K562 (cell line): ENCODE measurements at regions of chr9 and their contacts with region 1.

Region 1: GRCh38 chr9:114505187-114506081 is at the start of gene WHRN:
- DNase-seq: peak; percentile 95 to 96 (median 96)
- ATAC-seq: peak; percentile 80
- H3K4me3 ChIP-seq: peak within 1 kb of the TSS; percentile 60
- H3K27ac ChIP-seq: peak within 1 kb of the TSS; percentile 91
- H3K4me1 ChIP-seq: peaks cover 21 to 24% of the 10 kb centered on the region in 2 experiments; a peak in 3 of 5 replicates
- H3K27me3 ChIP-seq: peaks cover 15 to 18% of the 10 kb centered on the region in 2 experiments
- CTCF ChIP-seq: no peak
- EP300 ChIP-seq: no peak
- POLR2A ChIP-seq: peak; percentile 56
- RAD21 ChIP-seq: no peak
- polyA plus RNA-seq, gene WHRN: 0.31 TPM

Region 2: GRCh38 chr9:114131808-114132549 is 373.5 kb before region 1 on chr9:
- CTCF ChIA-PET with region 1: no interaction called
- POLR2A ChIA-PET with region 1: no interaction called
- in situ Hi-C with region 1: no loop called
- intact Hi-C with region 1: no loop called
- DNase-seq: no peak
- ATAC-seq: no peak
- H3K4me3 ChIP-seq: no peak overlapping the region
- H3K27ac ChIP-seq: no peak overlapping the region
- H3K4me1 ChIP-seq: no peaks in the 10 kb centered on the region
- H3K27me3 ChIP-seq: peaks cover 3 to 22% of the 10 kb centered on the region in 2 experiments; a peak in 2 of 5 replicates
- CTCF ChIP-seq: no peak
- EP300 ChIP-seq: no peak
- POLR2A ChIP-seq: no peak
- RAD21 ChIP-seq: no peak

Region 3: DNA sequence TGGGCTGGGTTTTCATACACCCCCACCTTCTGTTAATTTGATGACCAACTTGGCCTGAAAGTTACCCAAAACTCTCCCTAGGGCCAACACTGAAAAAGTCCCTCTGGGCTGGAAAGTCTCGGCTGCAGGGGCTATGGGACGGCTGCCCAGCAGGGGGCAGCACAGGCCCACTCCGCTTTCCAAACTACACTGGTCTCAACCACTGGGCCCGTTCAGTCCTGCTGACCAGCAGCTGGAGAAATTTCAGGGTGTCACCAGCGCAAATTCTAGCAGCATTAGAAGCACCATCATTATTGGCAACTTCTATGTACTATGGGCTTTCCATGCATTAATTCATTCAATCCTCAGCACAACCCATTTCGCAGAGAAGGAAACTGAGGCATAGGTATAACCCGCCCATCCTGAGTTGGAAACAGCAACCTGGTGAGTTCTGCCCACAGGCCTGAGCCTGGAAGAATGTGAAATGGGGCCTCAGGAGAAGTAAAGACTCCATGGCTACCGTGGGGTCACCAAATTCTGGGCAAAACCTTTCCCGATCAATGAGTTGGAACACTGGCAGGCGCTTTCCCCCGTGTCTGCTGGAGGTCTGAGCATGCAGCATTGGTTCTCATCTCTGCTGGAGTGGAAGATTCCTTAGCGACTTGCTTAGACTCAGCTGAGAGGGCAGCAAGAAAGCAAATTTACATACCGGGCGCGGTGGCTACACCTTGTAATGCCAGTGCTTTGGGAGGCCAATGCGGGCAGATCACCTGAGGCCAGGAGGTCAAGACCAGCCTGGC is 166.1 kb before region 1 on chr9:
- CTCF ChIA-PET with region 1: no interaction called
- POLR2A ChIA-PET with region 1: interaction called, 3 read pairs
- in situ Hi-C with region 1: no loop called
- intact Hi-C with region 1: loop called (anchors 5 kb)
- DNase-seq: peak; percentile 72 to 88 (median 86)
- ATAC-seq: peak; percentile 84
- H3K4me3 ChIP-seq: no peak overlapping the region
- H3K27ac ChIP-seq: no peak overlapping the region
- H3K4me1 ChIP-seq: peaks cover 0 to 3% of the 10 kb centered on the region in 2 experiments; a peak in 1 of 5 replicates
- H3K27me3 ChIP-seq: no peaks in the 10 kb centered on the region
- CTCF ChIP-seq: peak; percentile 83 to 95 (median 86)
- EP300 ChIP-seq: no peak
- POLR2A ChIP-seq: no peak
- RAD21 ChIP-seq: peak; percentile 14 to 56; a peak in 2 of 4 replicates

Region 4: GRCh38 chr9:114397848-114398605 is 107.4 kb before region 1 on chr9:
- CTCF ChIA-PET with region 1: no interaction called
- POLR2A ChIA-PET with region 1: no interaction called
- in situ Hi-C with region 1: no loop called
- intact Hi-C with region 1: loop called (anchors 5 kb)
- DNase-seq: peak; percentile 96 to 99 (median 99)
- ATAC-seq: peak; percentile 93
- H3K4me3 ChIP-seq: peak overlapping the region; percentile 75
- H3K27ac ChIP-seq: peak overlapping the region; percentile 70; the same call in 2 of the 3 replicates
- H3K4me1 ChIP-seq: peaks cover 20 to 21% of the 10 kb centered on the region in 2 experiments
- H3K27me3 ChIP-seq: no peaks in the 10 kb centered on the region
- CTCF ChIP-seq: no peak
- EP300 ChIP-seq: no peak
- POLR2A ChIP-seq: peak; percentile 61
- RAD21 ChIP-seq: no peak

Region 5: GRCh38 chr9:114405294-114406034 is 100.0 kb before region 1 on chr9:
- CTCF ChIA-PET with region 1: no interaction called
- POLR2A ChIA-PET with region 1: no interaction called
- in situ Hi-C with region 1: no loop called
- intact Hi-C with region 1: loop called (anchors 2 kb)
- DNase-seq: peak; percentile 75 to 83 (median 80)
- ATAC-seq: peak; percentile 97
- H3K4me3 ChIP-seq: no peak overlapping the region
- H3K27ac ChIP-seq: no peak overlapping the region
- H3K4me1 ChIP-seq: no peaks in the 10 kb centered on the region; a peak in 2 of 5 replicates
- H3K27me3 ChIP-seq: peaks cover 0 to 5% of the 10 kb centered on the region in 2 experiments; a peak in 1 of 5 replicates
- CTCF ChIP-seq: peak; percentile 85 to 91 (median 88)
- EP300 ChIP-seq: no peak
- POLR2A ChIP-seq: no peak
- RAD21 ChIP-seq: peak; percentile 76 to 88

Region 6: GRCh38 chr9:114434878-114435311 is 70.5 kb before region 1 on chr9:
- CTCF ChIA-PET with region 1: interaction called, 7 read pairs
- POLR2A ChIA-PET with region 1: no interaction called
- in situ Hi-C with region 1: no loop called
- intact Hi-C with region 1: loop called (anchors 1 kb)
- DNase-seq: peak; percentile 31 to 60 (median 46)
- ATAC-seq: peak; percentile 86
- H3K4me3 ChIP-seq: no peak overlapping the region
- H3K27ac ChIP-seq: no peak overlapping the region
- H3K4me1 ChIP-seq: peaks cover 0 to 6% of the 10 kb centered on the region in 2 experiments; a peak in 2 of 5 replicates
- H3K27me3 ChIP-seq: no peaks in the 10 kb centered on the region; a peak in 1 of 5 replicates
- CTCF ChIP-seq: peak; percentile 64 to 78 (median 71)
- EP300 ChIP-seq: no peak
- POLR2A ChIP-seq: no peak
- RAD21 ChIP-seq: peak; percentile 71 to 87

Region 7: GRCh38 chr9:114487607-114488300 is 17.7 kb before region 1 on chr9:
- CTCF ChIA-PET with region 1: interaction called, 4 read pairs
- POLR2A ChIA-PET with region 1: interaction called, 5 read pairs
- in situ Hi-C with region 1: no loop called
- intact Hi-C with region 1: loop called (anchors 2 kb)
- DNase-seq: peak; percentile 78 to 85 (median 78)
- ATAC-seq: peak; percentile 95
- H3K4me3 ChIP-seq: no peak overlapping the region
- H3K27ac ChIP-seq: no peak overlapping the region; the same call in 2 of the 3 replicates
- H3K4me1 ChIP-seq: peaks cover 5 to 21% of the 10 kb centered on the region in 2 experiments; a peak in 3 of 5 replicates
- H3K27me3 ChIP-seq: no peaks in the 10 kb centered on the region
- CTCF ChIP-seq: peak; percentile 80 to 93 (median 82)
- EP300 ChIP-seq: no peak
- POLR2A ChIP-seq: no peak
- RAD21 ChIP-seq: peak; percentile 77 to 87

Region 8: GRCh38 chr9:114538241-114538640 is 32.8 kb after region 1 on chr9:
- CTCF ChIA-PET with region 1: no interaction called
- POLR2A ChIA-PET with region 1: no interaction called
- in situ Hi-C with region 1: no loop called
- intact Hi-C with region 1: no loop called
- DNase-seq: peak in 3 of 4 experiments; percentile 30 to 63 (median 41)
- ATAC-seq: peak; percentile 99
- H3K4me3 ChIP-seq: no peak overlapping the region
- H3K27ac ChIP-seq: no peak overlapping the region
- H3K4me1 ChIP-seq: no peaks in the 10 kb centered on the region
- H3K27me3 ChIP-seq: peaks cover 13 to 19% of the 10 kb centered on the region in 2 experiments; a peak in 3 of 5 replicates
- CTCF ChIP-seq: peak; percentile 53 to 65 (median 62)
- EP300 ChIP-seq: no peak
- POLR2A ChIP-seq: no peak
- RAD21 ChIP-seq: peak; percentile 36 to 71; a peak in 3 of 4 replicates

Region 9: GRCh38 chr9:114604989-114605388 is 99.6 kb after region 1 on chr9:
- CTCF ChIA-PET with region 1: no interaction called
- POLR2A ChIA-PET with region 1: no interaction called
- in situ Hi-C with region 1: no loop called
- intact Hi-C with region 1: no loop called
- DNase-seq: no peak
- ATAC-seq: no peak
- H3K4me3 ChIP-seq: no peak overlapping the region
- H3K27ac ChIP-seq: no peak overlapping the region
- H3K4me1 ChIP-seq: no peaks in the 10 kb centered on the region
- H3K27me3 ChIP-seq: no peaks in the 10 kb centered on the region
- CTCF ChIP-seq: no peak
- EP300 ChIP-seq: no peak
- POLR2A ChIP-seq: no peak
- RAD21 ChIP-seq: no peak